Activated T-helper 2 cell treated with anti-CD3 and anti-CD28 coated beads, Interferon-gamma antibody, Interleukin-2, Interleukin-4, amounts not matched to agents 10 μg/mL and 5 μg/mL and 100 μg/mL, durations not matched to agents 14 hours and 24 hours and 36 hours (primary cell): ENCODE measurements at regions of chr3 and their contacts with region 1.

Region 1: DNA sequence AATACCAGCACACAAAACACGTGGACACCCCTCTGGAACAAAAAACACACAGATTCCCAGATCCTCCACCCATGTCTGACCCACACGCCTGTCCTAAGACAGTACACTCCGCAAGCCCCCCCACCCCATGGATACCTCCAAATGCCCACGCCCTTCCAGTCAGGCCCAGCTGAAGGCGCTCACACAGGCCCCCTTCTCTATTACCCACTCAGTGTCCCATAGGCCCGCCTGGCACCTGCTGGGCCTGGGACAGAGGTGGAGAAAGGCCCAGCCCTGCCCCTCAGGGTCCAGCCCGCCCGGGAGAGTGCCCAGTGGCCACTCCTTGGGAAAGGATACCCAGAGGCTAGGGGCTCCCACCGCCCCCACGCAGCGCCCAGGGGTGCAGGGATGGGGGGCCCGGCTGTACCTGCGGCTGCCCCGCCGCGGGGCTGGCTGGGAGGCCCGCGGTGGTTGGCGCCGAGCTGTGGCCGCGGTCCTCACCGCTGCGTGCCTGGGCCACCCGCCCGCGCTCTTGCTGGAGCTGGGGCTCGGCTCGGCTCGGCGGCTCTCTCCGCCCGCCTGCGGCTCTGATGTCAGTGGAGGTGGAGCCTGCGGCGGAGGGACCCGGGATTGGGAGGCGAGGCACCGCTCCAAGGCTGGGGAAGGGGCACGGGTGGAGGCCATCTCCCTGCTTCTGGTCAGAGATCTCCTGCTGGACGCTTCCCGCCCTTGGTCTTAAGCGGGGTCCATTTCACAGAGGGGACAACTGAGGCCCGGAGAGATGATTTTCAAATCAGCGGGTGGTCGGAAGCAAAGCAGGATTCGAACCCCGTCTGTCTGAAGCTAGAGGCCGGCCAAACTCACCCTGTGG is at the start of gene CAMK1:
- DNase-seq: peak; percentile 70
- H3K4me3 Mint-ChIP-seq: peak within 1 kb of the TSS; percentile 82
- H3K27ac Mint-ChIP-seq: peak within 1 kb of the TSS; percentile 65
- H3K4me1 Mint-ChIP-seq: peaks cover 36% of the 10 kb centered on the region
- H3K27me3 Mint-ChIP-seq: no peaks in the 10 kb centered on the region
- total RNA-seq, gene CAMK1: 113 and 116 TPM in 2 replicates

Region 2: GRCh38 chr3:9779721-9780457 is 10.2 kb after region 1 on chr3:
- intact Hi-C with region 1: loop called (anchors 1 kb)
- DNase-seq: peak; percentile 28
- H3K4me3 Mint-ChIP-seq: peak overlapping the region; percentile 62
- H3K27ac Mint-ChIP-seq: peak overlapping the region; percentile 98
- H3K4me1 Mint-ChIP-seq: peaks cover 58% of the 10 kb centered on the region
- H3K27me3 Mint-ChIP-seq: no peaks in the 10 kb centered on the region

Region 3: DNA sequence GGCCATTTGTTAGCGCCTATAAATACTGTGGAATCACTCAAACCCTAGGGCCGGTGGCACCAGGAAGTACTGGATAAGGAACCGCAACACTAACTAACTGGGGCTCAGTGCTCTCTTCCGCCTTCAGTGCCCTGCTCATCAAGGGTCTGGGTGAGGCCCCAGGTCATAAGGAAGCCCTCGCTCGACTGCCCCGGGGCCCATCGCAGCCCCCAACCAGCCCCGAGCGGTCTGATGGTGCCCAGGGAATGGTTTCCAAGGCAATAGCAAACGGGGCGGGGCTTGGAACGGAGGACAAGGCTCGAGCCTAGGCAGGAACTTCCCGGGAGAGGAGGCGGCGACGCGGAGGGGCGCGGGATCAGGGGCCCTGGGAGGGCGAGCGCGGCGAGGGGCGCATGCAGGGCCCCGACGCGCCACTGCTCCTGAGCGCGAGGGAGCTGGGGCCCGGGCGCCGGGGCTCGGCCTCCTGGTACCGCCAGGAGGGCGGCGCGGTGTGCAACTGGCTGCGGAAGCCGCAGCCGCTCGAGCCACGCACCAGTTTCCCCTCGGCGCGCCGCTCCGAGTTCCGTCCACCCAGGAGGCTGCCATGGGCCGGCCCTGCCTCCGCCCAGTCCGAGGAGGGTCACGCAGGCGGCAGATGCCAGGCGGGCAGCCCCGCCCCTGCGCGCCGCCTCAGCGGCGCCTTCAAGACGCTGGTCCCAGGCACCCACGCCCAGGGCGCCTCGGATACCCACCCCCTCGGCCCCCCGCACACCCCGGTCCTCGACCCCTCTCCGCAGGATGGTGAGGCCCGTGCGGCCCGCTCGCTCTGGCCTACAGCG is 40.2 kb after region 1 on chr3 and contains the start of gene TTLL3:
- intact Hi-C with region 1: loop called (anchors 5 kb)
- DNase-seq: peak; percentile 26
- H3K4me3 Mint-ChIP-seq: peak within 1 kb of the TSS; percentile 81
- H3K27ac Mint-ChIP-seq: peak within 1 kb of the TSS; percentile 85
- H3K4me1 Mint-ChIP-seq: peaks cover 32% of the 10 kb centered on the region
- H3K27me3 Mint-ChIP-seq: no peaks in the 10 kb centered on the region
- total RNA-seq, gene TTLL3: 51.0 and 56.5 TPM in 2 replicates

Region 4: DNA sequence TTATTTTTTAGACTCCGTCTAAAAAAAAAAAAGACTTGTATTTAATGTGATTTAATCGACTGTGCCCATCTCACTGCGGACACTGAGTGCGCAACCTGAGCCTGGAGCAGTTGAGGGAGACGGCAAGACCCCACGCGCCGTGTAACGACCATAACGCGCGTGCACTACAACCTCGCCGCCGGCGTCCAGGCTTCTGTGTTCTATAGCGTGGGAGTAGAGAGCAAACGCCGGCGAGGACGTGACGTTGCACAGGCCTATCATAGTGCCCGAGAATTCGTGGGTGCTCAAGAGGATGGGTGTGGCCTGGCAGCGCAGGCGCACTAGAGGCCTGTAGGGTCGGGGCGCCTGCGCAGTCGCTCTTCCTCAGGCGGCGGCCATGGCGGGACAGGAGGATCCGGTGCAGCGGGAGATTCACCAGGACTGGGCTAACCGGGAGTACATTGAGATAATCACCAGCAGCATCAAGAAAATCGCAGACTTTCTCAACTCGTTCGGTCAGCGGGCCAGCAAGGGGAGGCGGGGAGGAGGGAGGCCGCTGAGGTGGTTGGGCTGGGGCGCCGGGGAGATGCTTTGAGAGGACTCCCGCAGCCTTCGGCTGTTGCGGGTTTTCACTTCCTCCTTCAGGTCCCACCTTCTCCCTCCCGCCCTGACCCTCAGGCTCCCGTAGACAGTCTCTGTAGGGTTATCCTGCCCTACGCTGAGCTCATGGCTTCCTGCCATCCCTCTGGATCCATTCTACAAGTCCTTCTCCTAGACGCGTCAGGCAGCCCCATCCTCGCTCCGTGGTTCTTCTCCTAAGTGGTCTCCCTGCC is 345.9 kb after region 1 on chr3 and contains the start of gene BRK1:
- intact Hi-C with region 1: no loop called
- DNase-seq: peak; percentile 90
- H3K4me3 Mint-ChIP-seq: peak within 1 kb of the TSS; percentile 97
- H3K27ac Mint-ChIP-seq: peak within 1 kb of the TSS; percentile 96
- H3K4me1 Mint-ChIP-seq: peaks cover 19% of the 10 kb centered on the region
- H3K27me3 Mint-ChIP-seq: no peaks in the 10 kb centered on the region
- total RNA-seq, gene BRK1: 94.4 and 100 TPM in 2 replicates